ENCODE measurements at regions of chr2 and their contacts with region 1.

Region 1: DNA sequence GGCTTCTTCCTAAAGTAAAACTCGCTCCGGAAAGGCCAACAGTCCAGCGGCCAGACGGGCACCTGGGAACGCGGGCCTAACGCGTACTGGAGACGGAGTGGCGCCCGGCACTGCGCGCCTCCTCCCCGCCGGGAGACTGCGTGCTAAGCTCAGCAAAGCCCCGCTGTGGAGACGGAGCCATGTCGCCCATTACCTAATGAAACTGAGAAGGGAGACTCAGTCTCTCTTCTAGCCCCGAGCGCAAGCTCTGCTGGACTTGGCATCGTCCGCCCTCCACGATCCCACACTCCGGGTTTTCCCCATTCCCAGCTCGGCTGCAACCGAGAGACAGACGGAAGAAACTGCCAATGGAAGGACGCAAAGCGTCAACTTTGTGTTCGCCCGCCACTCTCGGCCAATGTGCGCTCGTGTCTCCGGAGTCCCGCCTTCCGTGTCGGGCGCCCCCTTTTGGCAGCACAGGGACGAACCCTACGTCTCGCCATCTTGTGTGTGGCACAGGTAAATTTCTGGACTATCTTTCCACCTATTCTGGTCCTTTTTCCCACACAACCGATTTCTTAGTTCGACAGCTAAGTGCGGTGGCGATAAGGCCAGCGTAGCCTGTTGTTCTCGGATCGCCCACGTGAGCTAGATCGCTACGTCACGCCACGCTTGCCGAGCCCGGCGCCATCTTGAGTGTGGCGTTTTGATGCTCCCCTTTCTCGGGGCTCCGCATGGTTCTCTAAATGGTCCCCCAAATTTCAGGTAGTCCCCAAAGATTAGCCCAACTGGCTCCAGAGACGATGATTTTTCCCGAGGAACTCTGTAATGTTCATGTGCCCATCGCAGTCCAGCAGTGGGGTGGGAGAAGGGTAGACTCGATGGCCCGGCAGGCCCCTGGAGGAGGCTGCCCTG is 1.3 kb upstream of the PTMA start:
- DNase-seq: peak; percentile 97 to 99 (median 99)
- H3K4me3 ChIP-seq: peak overlapping the region; percentile 74 to 97 (median 86)
- H3K27ac ChIP-seq: peak overlapping the region; percentile 100
- H3K4me1 ChIP-seq: peaks cover 8 to 37% (median 31%) of the 10 kb centered on the region in 4 experiments
- H3K27me3 ChIP-seq: no peaks in the 10 kb centered on the region

Region 2: DNA sequence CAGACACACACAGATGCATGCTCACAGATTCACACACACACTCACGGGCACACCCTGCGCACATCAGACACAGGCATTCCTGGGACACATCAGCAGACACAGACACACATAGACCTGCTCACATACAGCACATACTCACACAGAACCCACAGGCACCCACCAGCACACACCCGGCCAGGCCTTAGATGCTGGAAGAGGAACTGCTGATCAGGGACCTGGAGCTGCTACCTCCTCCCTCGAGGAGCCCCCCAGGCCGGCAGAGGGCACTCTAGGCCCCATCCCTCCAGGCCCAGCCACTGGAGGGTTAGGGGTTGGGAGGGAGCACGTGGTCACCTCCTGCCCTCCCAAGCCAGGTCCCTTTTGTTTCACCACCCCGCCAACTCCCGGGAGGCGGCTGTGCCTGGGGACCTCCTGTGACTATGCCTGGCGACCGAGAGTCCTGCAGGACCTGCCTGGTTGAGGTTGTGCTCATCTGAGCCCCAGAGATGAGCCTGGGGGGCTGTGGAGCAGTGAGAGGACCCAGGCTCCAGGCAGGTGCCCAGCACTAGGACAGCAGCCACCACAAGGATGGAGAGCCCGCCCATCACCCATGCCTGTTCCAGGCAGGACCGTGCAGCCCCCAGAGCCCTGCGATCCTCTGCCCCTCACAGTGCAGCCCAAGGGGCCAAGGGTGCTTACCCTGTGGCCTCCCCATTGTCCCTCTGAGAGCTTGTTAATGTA is 19.7 kb before region 1 on chr2:
- CTCF ChIA-PET with region 1: interaction called, 417 read pairs
- POLR2A ChIA-PET with region 1: interaction called, 6 read pairs
- DNase-seq: peak; percentile 79 to 88 (median 87)
- H3K4me3 ChIP-seq: peak overlapping the region in 6 of 7 experiments; percentile 33 to 70 (median 48)
- H3K27ac ChIP-seq: no peak overlapping the region
- H3K4me1 ChIP-seq: peaks cover 0 to 34% (median 24%) of the 10 kb centered on the region in 4 experiments
- H3K27me3 ChIP-seq: no peaks in the 10 kb centered on the region

Region 3: DNA sequence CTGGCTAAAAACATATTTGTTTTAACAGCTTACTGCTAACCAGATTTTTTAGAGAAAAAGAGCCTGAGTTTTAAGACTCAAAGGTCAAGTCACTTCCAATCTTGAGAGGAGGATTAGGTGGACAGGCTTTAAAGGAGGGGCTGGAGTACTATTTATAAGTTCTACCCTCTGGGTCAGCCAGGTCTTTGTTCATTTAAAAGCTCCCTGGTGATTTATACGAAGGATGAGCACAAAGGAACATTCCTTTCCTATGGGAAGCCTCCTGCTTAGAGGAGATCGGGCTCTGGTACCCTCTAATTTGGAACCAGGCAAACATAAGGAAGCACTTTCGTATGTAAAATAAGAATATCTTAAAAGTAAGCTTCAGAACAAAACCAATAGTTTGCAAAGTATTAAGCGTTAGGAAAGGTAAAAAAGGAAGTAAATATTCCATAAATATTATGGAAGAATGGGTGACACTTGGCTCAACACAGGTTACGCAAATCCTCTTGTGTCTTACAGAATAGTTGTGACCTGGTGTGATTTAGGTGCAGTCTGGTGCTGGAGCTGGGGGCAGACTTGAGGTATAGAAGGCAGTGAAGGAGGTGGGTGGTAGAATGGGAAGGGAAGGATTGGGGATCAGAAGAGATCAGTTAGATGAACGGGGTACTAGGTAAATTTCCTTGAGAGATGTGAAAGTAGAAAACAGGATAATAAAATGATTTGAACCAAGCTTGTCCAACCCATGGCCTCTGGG is 38.5 kb after region 1 on chr2:
- CTCF ChIA-PET with region 1: no interaction called
- POLR2A ChIA-PET with region 1: no interaction called
- DNase-seq: no peak
- H3K4me3 ChIP-seq: no peak overlapping the region
- H3K27ac ChIP-seq: no peak overlapping the region
- H3K4me1 ChIP-seq: no peaks in the 10 kb centered on the region
- H3K27me3 ChIP-seq: no peaks in the 10 kb centered on the region

Measured in common myeloid progenitor, CD34-positive (primary cell).